H1 (cell line): ENCODE measurements at regions of chr16 and their contacts with region 1.

Region 1: GRCh38 chr16:66872943-66873684 is 7.2 kb upstream of the PDP2 start:
- DNase-seq: peak; percentile 86 to 92
- H3K4me3 ChIP-seq: peak overlapping the region; percentile 17 to 64 (median 48); a peak in 7 of 8 replicates
- H3K27ac ChIP-seq: peak overlapping the region; percentile 52; the same call in 1 of the 2 replicates
- H3K4me1 ChIP-seq: peaks cover 0 to 6% (median 2%) of the 10 kb centered on the region in 4 experiments; a peak in 4 of 7 replicates
- H3K27me3 ChIP-seq: no peaks in the 10 kb centered on the region; a peak in 1 of 7 replicates
- CTCF ChIP-seq: peak; percentile 76 to 89 (median 88)
- EP300 ChIP-seq: no peak
- POLR2A ChIP-seq: peak in 1 of 2 experiments; percentile 58; a peak in 1 of 3 replicates
- RAD21 ChIP-seq: peak; percentile 21 to 54

Region 2: DNA sequence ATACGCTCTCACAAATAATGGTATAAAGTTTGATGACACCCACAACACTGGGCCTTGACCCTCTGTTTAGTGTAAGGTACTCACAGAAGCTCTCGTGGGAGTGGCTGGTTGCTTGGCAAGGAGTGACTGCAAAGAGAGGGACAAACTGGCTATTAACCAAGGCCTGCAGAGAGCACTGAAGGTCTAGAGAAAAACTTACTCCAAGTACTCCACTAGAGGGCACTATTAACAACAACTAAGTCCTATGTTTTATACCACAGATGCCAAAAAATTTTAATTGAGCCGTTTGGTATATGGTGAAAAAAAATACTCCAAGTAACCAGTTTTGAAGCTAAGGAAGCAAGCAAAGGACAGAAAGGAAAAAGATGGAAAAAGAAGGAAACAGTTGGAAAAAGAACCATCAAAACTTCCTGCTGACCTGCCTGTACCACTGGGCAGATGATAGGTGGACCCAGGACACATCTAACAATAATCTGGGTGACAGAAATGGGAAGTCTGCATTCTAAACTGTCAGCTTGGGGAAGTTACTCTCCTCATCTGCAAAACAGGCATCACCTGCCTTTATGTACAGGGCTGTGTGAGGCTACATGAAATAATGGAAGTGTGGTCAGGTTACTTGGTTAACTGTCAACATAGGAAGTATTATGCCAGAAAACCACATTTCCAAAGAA is 144.9 kb before region 1 on chr16:
- CTCF ChIA-PET with region 1: interaction called, 11 read pairs
- POLR2A ChIA-PET with region 1: interaction called, 5 read pairs
- DNase-seq: no peak
- H3K4me3 ChIP-seq: no peak overlapping the region
- H3K27ac ChIP-seq: no peak overlapping the region; the same call in 1 of the 2 replicates
- H3K4me1 ChIP-seq: peaks cover 0 to 6% (median 5%) of the 10 kb centered on the region in 4 experiments; a peak in 6 of 7 replicates
- H3K27me3 ChIP-seq: no peaks in the 10 kb centered on the region
- CTCF ChIP-seq: peak in 2 of 3 experiments; percentile 52 to 58; a peak in 3 of 4 replicates
- EP300 ChIP-seq: no peak
- POLR2A ChIP-seq: no peak
- RAD21 ChIP-seq: peak; percentile 37 to 50

Region 3: DNA sequence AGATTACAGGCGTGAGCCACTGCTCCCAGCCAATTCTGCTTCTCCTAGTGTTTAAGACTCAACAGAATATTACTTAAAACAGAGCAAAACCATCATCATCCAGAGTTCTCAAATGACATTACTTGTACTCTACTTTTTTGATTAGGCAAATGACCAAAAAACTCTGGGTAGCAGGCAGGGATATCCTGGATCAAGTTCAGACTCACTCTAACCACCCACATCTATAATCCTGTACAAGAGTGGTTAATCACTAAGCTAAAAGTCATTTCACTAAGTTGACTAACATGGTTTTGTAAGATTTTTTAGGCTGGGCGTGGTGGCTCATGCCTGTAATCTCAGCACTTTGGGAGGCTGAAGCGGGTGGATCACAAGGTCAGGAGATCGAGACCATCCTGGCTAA is 49.1 kb before region 1 on chr16:
- CTCF ChIA-PET with region 1: interaction called, 81 read pairs
- POLR2A ChIA-PET with region 1: interaction called, 19 read pairs
- DNase-seq: no peak
- H3K4me3 ChIP-seq: no peak overlapping the region
- H3K27ac ChIP-seq: no peak overlapping the region
- H3K4me1 ChIP-seq: no peaks in the 10 kb centered on the region
- H3K27me3 ChIP-seq: no peaks in the 10 kb centered on the region
- CTCF ChIP-seq: no peak
- EP300 ChIP-seq: no peak
- POLR2A ChIP-seq: no peak
- RAD21 ChIP-seq: no peak

Region 4: DNA sequence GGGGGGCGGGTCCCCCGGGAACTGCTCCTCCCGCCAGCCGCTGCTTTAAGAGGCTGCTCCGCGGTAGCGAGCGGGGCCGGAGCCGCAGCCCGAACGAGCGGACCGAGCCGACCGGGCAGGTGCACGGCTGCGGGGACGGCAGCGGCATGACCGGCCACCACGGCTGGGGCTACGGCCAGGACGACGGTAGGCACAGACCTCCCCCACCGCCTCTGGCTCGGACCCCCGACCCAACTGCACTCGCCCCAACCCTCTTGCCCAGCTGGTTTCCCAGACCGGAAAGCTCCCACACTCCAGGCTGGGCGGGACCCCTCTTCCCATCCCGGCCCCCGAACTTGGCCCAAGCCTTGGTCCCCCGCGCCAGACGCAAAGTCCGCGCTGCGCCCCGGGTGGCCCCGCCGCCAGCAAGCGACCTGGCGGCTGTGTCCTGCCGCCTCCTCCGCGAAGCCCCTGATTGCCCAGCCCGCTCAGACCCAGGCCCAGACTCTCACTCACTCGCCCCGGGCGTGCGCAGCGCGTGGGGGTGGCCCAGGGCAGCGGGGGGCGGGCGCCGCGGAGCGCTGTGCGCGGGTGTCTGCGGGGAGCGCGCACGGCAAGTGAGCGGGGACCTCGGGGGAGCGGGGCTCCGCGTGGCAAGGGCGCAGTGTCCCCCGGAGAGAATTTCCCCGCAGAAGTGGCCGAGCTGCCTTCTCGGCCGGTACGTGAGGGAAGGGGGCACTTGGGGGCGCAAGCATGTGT is 28.6 kb before region 1 on chr16 and contains the start of gene CA7:
- CTCF ChIA-PET with region 1: interaction called, 79 read pairs
- POLR2A ChIA-PET with region 1: interaction called, 7 read pairs
- DNase-seq: peak in 1 of 2 experiments; percentile 79
- H3K4me3 ChIP-seq: peak within 1 kb of the TSS; percentile 46 to 75 (median 62)
- H3K27ac ChIP-seq: no peak within 1 kb of the TSS
- H3K4me1 ChIP-seq: peaks cover 0 to 2% (median 0%) of the 10 kb centered on the region in 4 experiments; a peak in 3 of 7 replicates
- H3K27me3 ChIP-seq: peaks cover 14 to 45% (median 36%) of the 10 kb centered on the region in 4 experiments
- CTCF ChIP-seq: no peak
- EP300 ChIP-seq: no peak
- POLR2A ChIP-seq: no peak
- RAD21 ChIP-seq: no peak
- total RNA-seq, gene CA7: 1.7 and 1.8 TPM in 2 replicates

Region 5: DNA sequence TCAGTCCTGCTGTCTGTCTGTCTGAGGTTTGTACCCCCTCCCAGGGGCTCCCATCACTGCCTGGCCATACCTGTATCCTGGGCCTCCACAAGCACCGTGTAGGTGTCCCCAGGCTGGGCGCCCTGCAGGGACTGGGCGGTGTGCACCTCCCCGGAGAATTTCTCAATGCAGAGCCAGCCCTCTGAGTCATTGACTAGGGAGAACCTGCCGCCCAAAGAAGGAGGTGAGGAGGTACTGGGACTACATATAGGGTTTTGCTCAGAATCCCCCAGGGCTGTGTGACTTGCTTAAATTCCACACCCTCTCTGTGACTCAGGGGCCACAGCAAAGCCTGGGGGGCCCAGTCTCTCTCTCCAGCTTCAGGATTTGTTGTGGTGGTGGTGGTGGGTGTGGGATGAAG is 38.0 kb after region 1 on chr16:
- CTCF ChIA-PET with region 1: interaction called, 14 read pairs
- POLR2A ChIA-PET with region 1: no interaction called
- DNase-seq: no peak
- H3K4me3 ChIP-seq: no peak overlapping the region
- H3K27ac ChIP-seq: no peak overlapping the region
- H3K4me1 ChIP-seq: peaks cover 0 to 3% (median 0%) of the 10 kb centered on the region in 4 experiments; a peak in 1 of 7 replicates
- H3K27me3 ChIP-seq: no peaks in the 10 kb centered on the region; a peak in 3 of 7 replicates
- CTCF ChIP-seq: no peak
- EP300 ChIP-seq: no peak
- POLR2A ChIP-seq: no peak
- RAD21 ChIP-seq: no peak

Region 6: GRCh38 chr16:67000384-67001351 is 127.6 kb after region 1 on chr16:
- CTCF ChIA-PET with region 1: no interaction called
- POLR2A ChIA-PET with region 1: no interaction called
- DNase-seq: peak in 1 of 2 experiments; percentile 84
- H3K4me3 ChIP-seq: peak overlapping the region; percentile 25 to 72 (median 48)
- H3K27ac ChIP-seq: no peak overlapping the region
- H3K4me1 ChIP-seq: peaks cover 0 to 14% (median 9%) of the 10 kb centered on the region in 4 experiments; a peak in 5 of 7 replicates
- H3K27me3 ChIP-seq: peaks cover 9 to 51% (median 39%) of the 10 kb centered on the region in 4 experiments
- CTCF ChIP-seq: no peak
- EP300 ChIP-seq: no peak
- POLR2A ChIP-seq: no peak
- RAD21 ChIP-seq: no peak